ENCODE measurements at regions of chr4 and their contacts with region 1.

Region 1: GRCh38 chr4:147689067-147689466 is 5.1 kb upstream of the PRMT9 start:
- DNase-seq: peak; percentile 79
- ATAC-seq: peak; percentile 72
- H3K4me3 Mint-ChIP-seq: peak overlapping the region; percentile 59
- H3K27ac Mint-ChIP-seq: peak overlapping the region; percentile 86
- H3K4me1 Mint-ChIP-seq: peaks cover 42% of the 10 kb centered on the region
- H3K27me3 Mint-ChIP-seq: peaks cover 5% of the 10 kb centered on the region

Region 2: DNA sequence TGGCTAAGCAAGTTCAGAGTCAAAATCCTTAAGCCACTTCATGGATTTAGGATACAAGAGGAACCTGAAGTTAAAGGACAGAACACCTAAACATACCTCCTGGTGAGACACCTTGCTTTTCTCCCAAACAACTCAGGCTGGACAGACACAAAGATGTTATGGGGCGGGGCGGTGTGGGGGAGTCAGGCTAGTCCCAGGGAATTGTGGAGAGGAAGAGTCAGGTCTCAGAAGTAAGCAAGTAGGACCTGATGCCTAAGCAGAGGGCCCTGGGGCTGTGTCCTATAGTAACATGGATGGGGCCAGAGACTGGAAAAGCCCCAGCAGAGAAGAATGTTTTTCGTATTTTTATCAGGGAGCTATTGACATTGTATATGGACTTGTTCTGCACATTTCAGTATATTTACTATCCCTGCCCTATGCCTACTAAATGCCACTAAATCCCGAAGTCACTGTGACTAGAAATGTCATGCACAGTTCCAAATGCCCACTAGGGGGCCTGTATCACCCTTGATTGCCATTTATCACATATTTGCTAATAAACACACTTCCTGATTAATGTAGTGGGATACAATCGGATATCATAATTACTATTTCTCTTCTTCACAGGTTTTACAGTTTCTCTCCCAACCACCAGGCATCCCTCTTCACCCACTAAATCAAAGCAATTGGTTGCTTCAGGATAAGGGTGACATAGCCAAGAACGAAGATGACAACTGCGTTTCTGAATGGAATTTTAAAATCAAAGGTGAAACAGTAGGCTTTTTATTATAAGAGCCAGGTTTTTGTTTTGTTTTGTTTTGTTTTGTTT is 19.0 kb after region 1 on chr4:
- CTCF ChIA-PET with region 1: interaction called, 14 read pairs
- POLR2A ChIA-PET with region 1: no interaction called
- DNase-seq: peak; percentile 62
- ATAC-seq: peak; percentile 71
- H3K4me3 Mint-ChIP-seq: no peak overlapping the region
- H3K27ac Mint-ChIP-seq: no peak overlapping the region
- H3K4me1 Mint-ChIP-seq: peaks cover 12% of the 10 kb centered on the region
- H3K27me3 Mint-ChIP-seq: peaks cover 13% of the 10 kb centered on the region